WTC11 (cell line): ENCODE measurements at regions of chr14 and their contacts with region 1.

Region 1: DNA sequence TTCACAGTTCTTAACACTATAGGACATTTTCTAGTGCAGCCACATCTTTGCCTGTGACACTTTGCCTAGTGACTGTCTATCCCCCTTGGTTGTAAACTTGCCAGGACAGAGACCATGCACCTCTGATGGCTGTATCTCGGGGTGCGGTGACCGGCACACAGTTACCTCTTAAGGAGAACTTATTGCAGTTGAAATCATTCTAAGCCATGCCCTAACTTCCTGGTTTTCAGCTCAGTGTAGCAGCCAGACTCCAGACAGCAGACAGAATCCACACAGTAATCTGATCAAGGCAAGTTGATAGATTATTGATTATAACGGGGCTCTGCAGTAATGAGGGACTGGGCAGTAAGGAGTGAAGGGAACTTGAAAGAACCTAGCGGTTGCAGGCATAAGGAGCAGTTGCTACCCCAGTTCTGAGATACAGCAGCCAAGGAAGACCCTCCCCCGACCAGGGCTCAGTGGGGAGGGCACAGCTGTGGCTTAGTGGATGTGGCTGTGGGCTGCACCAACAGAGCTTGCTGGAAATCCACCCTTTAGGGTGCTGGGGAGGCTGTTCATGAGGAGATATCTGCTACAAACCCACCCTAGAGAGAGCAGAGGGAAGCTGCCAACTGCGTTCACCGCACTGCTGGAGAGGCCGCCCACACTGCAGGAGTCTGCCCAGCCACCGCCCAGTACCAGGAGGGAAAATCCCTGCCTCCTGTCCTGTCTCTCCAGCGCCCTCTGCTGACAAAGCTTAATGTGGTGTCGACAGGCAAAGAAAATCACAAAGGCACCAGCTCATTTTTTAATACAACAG is 58.2 kb upstream of the BEGAIN start:
- DNase-seq: peak; percentile 96
- ATAC-seq: peak; percentile 94
- H3K4me3 Mint-ChIP-seq: peak overlapping the region; percentile 50
- H3K27ac Mint-ChIP-seq: no peak overlapping the region
- H3K4me1 Mint-ChIP-seq: peaks cover 9% of the 10 kb centered on the region
- H3K27me3 Mint-ChIP-seq: peaks cover 6% of the 10 kb centered on the region
- CTCF ChIP-seq: peak; percentile 75

Region 2: DNA sequence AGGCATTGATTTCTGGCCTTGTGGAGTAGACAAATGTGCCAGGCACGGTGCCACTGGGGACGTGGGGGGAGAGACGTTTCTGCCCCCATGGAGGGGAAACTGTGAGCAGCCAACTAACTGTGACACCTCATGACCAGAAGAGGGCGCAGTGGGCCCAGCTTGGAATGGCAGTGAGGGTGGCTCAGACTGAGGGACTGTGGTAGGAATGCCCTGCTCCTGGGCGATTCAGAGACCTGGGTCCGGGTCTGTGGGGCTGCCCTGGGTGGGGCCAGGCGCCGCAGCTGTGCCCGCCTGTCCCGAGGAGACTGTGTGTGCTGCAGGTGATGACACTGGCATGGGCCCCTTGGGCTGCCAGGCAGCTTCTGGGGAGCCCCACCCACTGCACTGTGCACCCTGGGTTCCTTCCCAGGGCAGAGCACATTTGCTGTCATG is 261.6 kb before region 1 on chr14:
- CTCF ChIA-PET with region 1: interaction called, 83 read pairs
- POLR2A ChIA-PET with region 1: no interaction called
- DNase-seq: peak; percentile 77
- ATAC-seq: peak; percentile 94
- H3K4me3 Mint-ChIP-seq: no peak overlapping the region
- H3K27ac Mint-ChIP-seq: no peak overlapping the region
- H3K4me1 Mint-ChIP-seq: peaks cover 35% of the 10 kb centered on the region
- H3K27me3 Mint-ChIP-seq: no peaks in the 10 kb centered on the region
- CTCF ChIP-seq: peak; percentile 84

Region 3: DNA sequence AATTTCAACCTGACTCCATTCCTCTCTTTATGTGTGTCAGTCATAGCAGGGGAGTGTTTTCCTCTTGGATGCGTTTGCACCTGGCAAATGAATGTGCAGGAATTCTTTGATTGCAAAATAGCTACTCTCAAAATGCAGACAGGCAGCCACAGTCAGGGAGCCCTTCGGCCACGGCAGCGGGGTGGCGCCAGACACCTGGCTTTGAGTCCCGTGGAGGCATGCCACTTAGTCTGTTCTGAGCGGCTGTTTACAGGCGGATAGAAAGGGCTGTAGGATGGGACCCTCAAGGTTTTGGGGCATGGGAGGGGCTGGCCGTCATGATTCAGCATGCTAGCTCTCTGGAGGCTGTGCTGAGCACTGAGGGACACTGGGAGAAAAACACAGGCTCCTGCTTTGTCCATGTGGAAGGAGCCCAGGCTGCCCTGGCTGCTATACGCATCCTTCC is 205.2 kb before region 1 on chr14:
- CTCF ChIA-PET with region 1: interaction called, 47 read pairs
- POLR2A ChIA-PET with region 1: interaction called, 3 read pairs
- DNase-seq: peak; percentile 72
- ATAC-seq: peak; percentile 83
- H3K4me3 Mint-ChIP-seq: no peak overlapping the region
- H3K27ac Mint-ChIP-seq: 0 out of 2 replicates have a peak overlapping the region, but pooled peaks have one; percentile 43
- H3K4me1 Mint-ChIP-seq: peaks cover 33% of the 10 kb centered on the region
- H3K27me3 Mint-ChIP-seq: no peaks in the 10 kb centered on the region
- CTCF ChIP-seq: no peak

Region 4: GRCh38 chr14:100533656-100534485 is 111.5 kb before region 1 on chr14:
- CTCF ChIA-PET with region 1: interaction called, 56 read pairs
- POLR2A ChIA-PET with region 1: no interaction called
- DNase-seq: peak; percentile 9
- ATAC-seq: no peak
- H3K4me3 Mint-ChIP-seq: no peak overlapping the region
- H3K27ac Mint-ChIP-seq: no peak overlapping the region
- H3K4me1 Mint-ChIP-seq: peaks cover 3% of the 10 kb centered on the region; the same call in 1 of the 2 replicates
- H3K27me3 Mint-ChIP-seq: no peaks in the 10 kb centered on the region
- CTCF ChIP-seq: no peak

Region 5: GRCh38 chr14:100568164-100568997 is 77.0 kb before region 1 on chr14:
- CTCF ChIA-PET with region 1: interaction called, 21 read pairs
- POLR2A ChIA-PET with region 1: no interaction called
- DNase-seq: peak; percentile 35
- ATAC-seq: 0 out of 2 replicates have a peak, but pooled peaks have one; percentile 3
- H3K4me3 Mint-ChIP-seq: peak overlapping the region; percentile 41
- H3K27ac Mint-ChIP-seq: no peak overlapping the region
- H3K4me1 Mint-ChIP-seq: peaks cover 20% of the 10 kb centered on the region
- H3K27me3 Mint-ChIP-seq: peaks cover 55% of the 10 kb centered on the region
- CTCF ChIP-seq: no peak

Region 6: DNA sequence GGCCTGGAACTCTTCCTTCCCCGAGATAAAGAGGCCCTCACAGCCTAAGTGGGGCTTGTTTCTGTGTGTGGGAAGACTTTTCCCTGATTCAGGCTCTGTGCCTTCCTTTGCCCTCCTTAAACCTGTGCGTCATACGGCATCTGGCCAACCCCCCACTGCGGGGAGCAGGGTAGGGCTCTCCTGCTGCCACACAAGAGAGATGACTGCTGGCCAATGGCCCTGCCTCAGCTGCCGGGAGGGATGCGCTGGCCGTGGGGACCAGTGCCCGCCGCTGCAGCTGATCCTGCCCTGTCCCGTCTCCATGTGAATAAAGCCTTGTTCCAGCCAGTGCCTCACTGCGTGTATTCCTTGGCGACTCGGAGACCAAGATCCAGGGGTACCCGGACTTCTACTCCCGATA is 15.7 kb before region 1 on chr14:
- CTCF ChIA-PET with region 1: interaction called, 28 read pairs
- POLR2A ChIA-PET with region 1: no interaction called
- DNase-seq: no peak
- ATAC-seq: no peak
- H3K4me3 Mint-ChIP-seq: no peak overlapping the region
- H3K27ac Mint-ChIP-seq: no peak overlapping the region
- H3K4me1 Mint-ChIP-seq: no peaks in the 10 kb centered on the region
- H3K27me3 Mint-ChIP-seq: peaks cover 2% of the 10 kb centered on the region; the same call in 1 of the 2 replicates
- CTCF ChIP-seq: no peak

Region 7: GRCh38 chr14:100815478-100816285 is 170.3 kb after region 1 on chr14:
- CTCF ChIA-PET with region 1: no interaction called
- POLR2A ChIA-PET with region 1: no interaction called
- DNase-seq: no peak
- ATAC-seq: no peak
- H3K4me3 Mint-ChIP-seq: no peak overlapping the region
- H3K27ac Mint-ChIP-seq: 0 out of 2 replicates have a peak overlapping the region, but pooled peaks have one; percentile 26
- H3K4me1 Mint-ChIP-seq: peaks cover 48% of the 10 kb centered on the region
- H3K27me3 Mint-ChIP-seq: no peaks in the 10 kb centered on the region; the same call in 1 of the 2 replicates
- CTCF ChIP-seq: no peak

Region 8: DNA sequence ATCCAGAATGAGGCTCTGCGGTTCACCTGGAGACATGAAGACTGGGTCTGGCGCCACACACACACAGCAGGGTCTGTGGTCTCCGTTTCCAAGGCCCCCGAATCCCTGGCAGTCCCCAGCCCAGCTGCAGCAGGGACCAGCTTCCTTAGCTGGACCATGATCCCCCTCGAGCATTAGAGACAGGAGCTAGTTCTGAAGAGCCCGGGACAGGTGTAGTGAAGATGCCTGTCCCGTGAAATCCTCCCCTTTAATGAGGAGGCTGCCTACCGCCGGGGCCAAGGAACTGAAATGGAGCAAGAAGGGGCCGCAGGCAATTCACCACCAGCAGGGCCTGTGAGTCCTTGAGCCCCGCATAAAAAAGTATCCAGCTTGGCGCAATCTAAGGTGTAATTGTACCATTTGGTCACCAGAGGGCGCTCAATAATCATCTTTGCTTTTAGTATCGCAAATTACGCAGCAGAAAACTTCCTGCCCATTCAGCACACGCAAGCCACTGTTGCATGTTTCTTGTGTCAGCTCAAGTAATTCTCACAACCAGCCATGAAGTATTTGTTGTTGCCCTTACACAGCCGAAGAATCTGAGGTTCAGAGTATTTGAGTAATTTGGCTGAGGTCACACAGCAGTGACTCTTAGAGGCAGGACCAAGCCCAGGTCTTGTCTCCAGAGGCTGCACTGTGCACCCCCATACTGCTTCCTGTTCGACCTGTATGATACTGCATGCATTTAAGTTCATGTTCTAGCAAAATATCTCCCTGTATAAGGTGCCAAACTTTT is 1061.9 kb after region 1 on chr14:
- CTCF ChIA-PET with region 1: no interaction called
- POLR2A ChIA-PET with region 1: no interaction called
- DNase-seq: peak; percentile 67
- ATAC-seq: peak; percentile 71
- H3K4me3 Mint-ChIP-seq: no peak overlapping the region
- H3K27ac Mint-ChIP-seq: no peak overlapping the region
- H3K4me1 Mint-ChIP-seq: peaks cover 29% of the 10 kb centered on the region
- H3K27me3 Mint-ChIP-seq: peaks cover 44% of the 10 kb centered on the region
- CTCF ChIP-seq: peak; percentile 94